ENCODE measurements at regions of chr18 and their contacts with region 1.

Region 1: DNA sequence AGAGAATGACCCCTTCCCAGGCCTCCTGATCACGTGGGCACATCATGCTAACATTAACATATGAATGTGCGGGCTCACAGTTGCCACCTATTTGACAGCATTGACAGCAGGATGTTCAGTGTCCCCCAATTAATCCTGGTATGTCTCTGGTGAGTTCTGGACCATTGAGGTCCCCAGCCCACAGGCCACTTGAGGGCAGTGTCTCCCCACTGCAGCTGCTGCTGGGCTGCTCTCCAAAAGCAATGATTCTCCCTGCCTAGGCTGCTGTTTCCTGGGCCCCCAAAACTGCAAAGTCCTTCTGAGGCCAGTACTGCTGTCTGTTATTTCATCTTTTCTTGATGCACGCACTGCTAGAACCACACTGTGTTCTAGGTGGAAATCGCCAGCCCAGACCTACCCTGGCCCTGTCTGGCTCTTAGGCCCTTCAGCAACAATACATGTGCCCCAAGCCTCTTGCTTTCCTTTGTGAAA is 52.7 kb upstream of the MAPK4 start:
- DNase-seq: peak; percentile 55 to 83 (median 75)
- H3K4me3 ChIP-seq: no peak overlapping the region
- H3K27ac ChIP-seq: no peak overlapping the region
- H3K4me1 ChIP-seq: no peaks in the 10 kb centered on the region
- H3K27me3 ChIP-seq: no peaks in the 10 kb centered on the region
- CTCF ChIP-seq: peak; percentile 59 to 91 (median 84)
- POLR2A ChIP-seq: no peak

Region 2: DNA sequence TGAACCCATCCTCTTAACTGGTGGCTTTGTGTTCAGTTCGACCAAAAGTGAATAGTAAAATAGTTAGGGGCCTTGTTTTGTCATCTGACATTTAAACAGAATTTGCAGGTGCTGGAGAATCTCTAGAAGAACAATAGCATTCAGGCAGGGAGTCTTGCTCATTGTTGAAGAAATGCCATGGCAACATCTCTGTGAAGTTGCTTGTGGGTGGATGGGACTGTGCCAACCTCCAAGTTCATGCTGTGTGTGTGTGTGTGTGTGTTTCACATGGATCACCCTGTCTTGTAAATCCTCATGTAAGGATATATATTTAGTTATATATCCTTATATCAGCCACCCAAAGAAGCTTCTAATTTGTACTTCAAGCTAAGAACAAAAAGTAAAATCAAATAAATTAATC is 65.6 kb before region 1 on chr18:
- intact Hi-C with region 1: no loop called
- DNase-seq: no peak
- H3K4me3 ChIP-seq: no peak overlapping the region
- H3K27ac ChIP-seq: no peak overlapping the region
- H3K4me1 ChIP-seq: no peaks in the 10 kb centered on the region
- H3K27me3 ChIP-seq: no peaks in the 10 kb centered on the region
- CTCF ChIP-seq: no peak
- POLR2A ChIP-seq: no peak

Region 3: GRCh38 chr18:50454387-50454988 is 52.7 kb before region 1 on chr18:
- intact Hi-C with region 1: no loop called
- DNase-seq: no peak
- H3K4me3 ChIP-seq: no peak overlapping the region
- H3K27ac ChIP-seq: no peak overlapping the region
- H3K4me1 ChIP-seq: no peaks in the 10 kb centered on the region
- H3K27me3 ChIP-seq: no peaks in the 10 kb centered on the region
- CTCF ChIP-seq: no peak
- POLR2A ChIP-seq: no peak

Region 4: DNA sequence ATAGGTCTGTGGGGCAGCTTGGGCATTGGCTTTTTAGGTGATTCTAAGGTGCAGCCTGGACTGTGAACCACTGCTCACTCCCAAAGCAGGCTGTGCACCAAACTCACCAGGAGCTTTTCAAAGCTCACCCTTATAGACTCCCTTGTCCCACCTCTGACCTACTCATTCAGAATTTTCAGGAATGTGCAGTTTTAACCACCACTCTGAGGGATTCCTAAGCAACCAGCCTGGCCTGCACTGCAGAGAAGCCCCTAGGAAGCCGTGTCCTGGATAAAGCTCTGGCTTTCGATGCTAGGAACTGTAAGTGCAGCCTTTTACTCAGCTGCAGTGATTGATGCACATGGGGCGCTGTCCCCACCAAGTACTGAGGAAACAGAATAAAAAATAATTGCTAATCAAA is 279.7 kb after region 1 on chr18:
- intact Hi-C with region 1: loop called (anchors 2 to 10 kb)
- DNase-seq: no peak
- H3K4me3 ChIP-seq: no peak overlapping the region
- H3K27ac ChIP-seq: no peak overlapping the region
- H3K4me1 ChIP-seq: no peaks in the 10 kb centered on the region
- H3K27me3 ChIP-seq: no peaks in the 10 kb centered on the region
- CTCF ChIP-seq: no peak
- POLR2A ChIP-seq: no peak